CD4-positive, alpha-beta memory T cell (primary cell): ENCODE measurements at regions of chr5 and their contacts with region 1.

Region 1: DNA sequence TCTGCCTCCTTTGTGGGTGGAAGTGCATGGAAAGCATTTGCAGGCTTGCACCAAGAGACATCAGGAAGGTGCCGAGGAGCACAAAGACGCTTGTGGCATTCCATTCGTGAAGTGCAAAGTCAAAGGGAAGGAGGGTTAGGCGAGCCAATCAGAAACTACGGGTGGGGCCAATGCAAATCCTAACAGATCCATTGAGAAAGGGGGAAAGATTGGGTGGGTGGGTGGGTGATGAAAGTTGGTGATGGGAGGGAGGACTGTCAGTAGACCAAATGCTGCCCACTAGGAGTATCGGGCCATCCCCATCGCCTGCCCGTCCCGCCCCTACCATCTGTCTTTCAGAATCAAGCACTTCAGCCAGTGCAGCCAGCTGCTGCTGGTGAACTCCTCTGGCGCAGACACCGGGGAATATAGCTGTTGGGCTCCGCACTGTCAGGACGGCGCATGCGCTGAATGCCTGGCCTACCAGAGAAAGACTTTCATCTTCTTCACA is 17.1 kb upstream of the ANXA6 start:
- DNase-seq: no peak
- H3K4me3 ChIP-seq: no peak overlapping the region
- H3K4me3 Mint-ChIP-seq: no peak overlapping the region
- H3K27ac ChIP-seq: no peak overlapping the region
- H3K27ac Mint-ChIP-seq: peak overlapping the region in 1 of 7 donors; percentile 89
- H3K4me1 ChIP-seq: peaks cover 8% of the 10 kb centered on the region
- H3K4me1 Mint-ChIP-seq: peaks cover 17 to 19% (median 18%) of the 10 kb centered on the region in 4 donors
- H3K27me3 ChIP-seq: no peaks in the 10 kb centered on the region
- H3K27me3 Mint-ChIP-seq: no peaks in the 10 kb centered on the region

Region 2: DNA sequence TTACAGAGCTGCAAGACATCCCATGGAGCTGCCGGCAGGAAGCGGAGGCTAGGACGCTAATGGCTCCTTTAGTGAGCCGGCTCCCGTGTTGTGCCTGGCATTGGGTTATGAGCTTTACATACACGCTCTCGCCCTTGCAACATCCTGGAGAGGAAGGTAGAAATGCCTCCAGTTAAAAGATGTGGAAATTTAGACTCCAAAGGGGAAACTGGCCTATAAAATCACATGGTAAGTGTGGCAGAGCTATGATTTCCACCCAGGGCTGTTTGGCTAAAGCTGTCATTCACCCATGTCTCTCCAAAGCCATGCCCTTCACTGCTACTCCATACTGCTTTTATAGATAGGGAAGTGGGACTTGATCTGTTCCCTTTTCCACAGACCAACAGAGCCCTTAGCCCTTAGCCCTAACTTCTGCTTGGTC is 83.5 kb after region 1 on chr5:
- CTCF ChIA-PET with region 1: no interaction called
- POLR2A ChIA-PET with region 1: no interaction called
- intact Hi-C with region 1: no loop called
- DNase-seq: no peak
- H3K4me3 ChIP-seq: no peak overlapping the region
- H3K4me3 Mint-ChIP-seq: no peak overlapping the region
- H3K27ac ChIP-seq: no peak overlapping the region
- H3K27ac Mint-ChIP-seq: peak overlapping the region in 1 of 7 donors; percentile 9
- H3K4me1 ChIP-seq: peaks cover 14% of the 10 kb centered on the region
- H3K4me1 Mint-ChIP-seq: peaks cover 7 to 33% (median 17%) of the 10 kb centered on the region in 4 donors
- H3K27me3 ChIP-seq: no peaks in the 10 kb centered on the region
- H3K27me3 Mint-ChIP-seq: no peaks in the 10 kb centered on the region

Region 3: GRCh38 chr5:151274670-151275069 is 100.0 kb after region 1 on chr5:
- CTCF ChIA-PET with region 1: no interaction called
- POLR2A ChIA-PET with region 1: no interaction called
- intact Hi-C with region 1: no loop called
- DNase-seq: no peak
- H3K4me3 ChIP-seq: no peak overlapping the region
- H3K4me3 Mint-ChIP-seq: no peak overlapping the region
- H3K27ac ChIP-seq: no peak overlapping the region
- H3K27ac Mint-ChIP-seq: no peak overlapping the region
- H3K4me1 ChIP-seq: no peaks in the 10 kb centered on the region
- H3K4me1 Mint-ChIP-seq: no peaks in the 10 kb centered on the region
- H3K27me3 ChIP-seq: no peaks in the 10 kb centered on the region
- H3K27me3 Mint-ChIP-seq: no peaks in the 10 kb centered on the region

Region 4: GRCh38 chr5:151315998-151316597 is 141.4 kb after region 1 on chr5:
- CTCF ChIA-PET with region 1: no interaction called
- POLR2A ChIA-PET with region 1: no interaction called
- intact Hi-C with region 1: loop called (anchors 5 kb)
- DNase-seq: peak in 4 of 5 donors; percentile 2 to 19 (median 12)
- H3K4me3 ChIP-seq: no peak overlapping the region
- H3K4me3 Mint-ChIP-seq: no peak overlapping the region
- H3K27ac ChIP-seq: no peak overlapping the region
- H3K27ac Mint-ChIP-seq: no peak overlapping the region
- H3K4me1 ChIP-seq: no peaks in the 10 kb centered on the region
- H3K4me1 Mint-ChIP-seq: peaks cover 0 to 4% (median 1%) of the 10 kb centered on the region in 4 donors
- H3K27me3 ChIP-seq: no peaks in the 10 kb centered on the region
- H3K27me3 Mint-ChIP-seq: peaks cover 8 to 11% of the 10 kb centered on the region in 2 donors

Region 5: DNA sequence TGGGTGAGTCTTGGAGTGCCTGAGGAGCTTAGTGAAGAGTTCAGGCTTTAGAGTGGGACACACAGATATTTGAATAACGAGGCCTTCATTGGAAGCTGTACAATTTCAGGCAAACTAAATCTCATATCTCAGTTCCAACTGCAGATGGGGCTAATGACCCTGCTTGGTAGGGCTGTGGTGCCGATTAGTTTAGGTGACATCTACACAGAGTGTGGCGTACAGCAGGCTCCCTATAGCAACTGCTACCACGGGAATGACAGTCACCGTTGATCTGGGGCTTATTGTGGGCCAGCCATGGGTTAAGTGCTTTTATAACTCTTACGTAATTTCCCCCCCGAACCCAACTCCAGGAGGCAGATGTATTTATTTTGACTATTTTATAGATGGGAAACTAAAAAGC is 345.6 kb after region 1 on chr5:
- CTCF ChIA-PET with region 1: no interaction called
- POLR2A ChIA-PET with region 1: no interaction called
- intact Hi-C with region 1: no loop called
- DNase-seq: no peak
- H3K4me3 ChIP-seq: no peak overlapping the region
- H3K4me3 Mint-ChIP-seq: no peak overlapping the region
- H3K27ac ChIP-seq: no peak overlapping the region
- H3K27ac Mint-ChIP-seq: no peak overlapping the region
- H3K4me1 ChIP-seq: no peaks in the 10 kb centered on the region
- H3K4me1 Mint-ChIP-seq: peaks cover 0 to 8% (median 0%) of the 10 kb centered on the region in 4 donors
- H3K27me3 ChIP-seq: no peaks in the 10 kb centered on the region
- H3K27me3 Mint-ChIP-seq: no peaks in the 10 kb centered on the region